ENCODE measurements at regions of chr17 and their contacts with region 1.

Region 1: GRCh38 chr17:8337802-8338752 is 1.6 kb upstream of the ODF4 start:
- DNase-seq: peak; percentile 27
- H3K4me3 Mint-ChIP-seq: no peak overlapping the region
- H3K27ac Mint-ChIP-seq: peak overlapping the region; percentile 43
- H3K4me1 Mint-ChIP-seq: peaks cover 12% of the 10 kb centered on the region
- H3K27me3 Mint-ChIP-seq: no peaks in the 10 kb centered on the region

Region 2: GRCh38 chr17:8326511-8327302 is 11.4 kb before region 1 on chr17:
- CTCF ChIA-PET with region 1: interaction called, 10 read pairs
- intact Hi-C with region 1: no loop called
- DNase-seq: peak; percentile 50
- H3K4me3 Mint-ChIP-seq: peak overlapping the region; percentile 65
- H3K27ac Mint-ChIP-seq: no peak overlapping the region
- H3K4me1 Mint-ChIP-seq: peaks cover 18% of the 10 kb centered on the region
- H3K27me3 Mint-ChIP-seq: peaks cover 34% of the 10 kb centered on the region

Region 3: GRCh38 chr17:8397203-8398045 is 59.3 kb after region 1 on chr17 and contains the start of gene RNF222:
- CTCF ChIA-PET with region 1: no interaction called
- intact Hi-C with region 1: no loop called
- DNase-seq: no peak
- H3K4me3 Mint-ChIP-seq: no peak within 1 kb of the TSS
- H3K27ac Mint-ChIP-seq: no peak within 1 kb of the TSS
- H3K4me1 Mint-ChIP-seq: peaks cover 10% of the 10 kb centered on the region
- H3K27me3 Mint-ChIP-seq: peaks cover 9% of the 10 kb centered on the region
- total RNA-seq, gene RNF222: 0.07 to 0.10 TPM